K562 (cell line): ENCODE measurements at regions of chr3 and their contacts with region 1.

Region 1: GRCh38 chr3:185983495-185984141 is 45.8 kb upstream of the TRA2B start:
- DNase-seq: peak; percentile 78 to 87 (median 83)
- ATAC-seq: peak; percentile 96
- H3K4me3 ChIP-seq: no peak overlapping the region
- H3K27ac ChIP-seq: no peak overlapping the region
- H3K4me1 ChIP-seq: peaks cover 4% of the 10 kb centered on the region in 2 experiments; a peak in 3 of 5 replicates
- H3K27me3 ChIP-seq: peaks cover 0 to 6% of the 10 kb centered on the region in 2 experiments; a peak in 2 of 5 replicates
- CTCF ChIP-seq: peak; percentile 85 to 92 (median 86)
- EP300 ChIP-seq: no peak
- POLR2A ChIP-seq: no peak
- RAD21 ChIP-seq: peak; percentile 93

Region 2: GRCh38 chr3:185880600-185880999 is 103.0 kb before region 1 on chr3:
- CTCF ChIA-PET with region 1: no interaction called
- POLR2A ChIA-PET with region 1: no interaction called
- in situ Hi-C with region 1: no loop called
- intact Hi-C with region 1: loop called (anchors 5 kb)
- DNase-seq: no peak
- ATAC-seq: no peak
- H3K4me3 ChIP-seq: no peak overlapping the region
- H3K27ac ChIP-seq: no peak overlapping the region
- H3K4me1 ChIP-seq: no peaks in the 10 kb centered on the region; a peak in 2 of 5 replicates
- H3K27me3 ChIP-seq: no peaks in the 10 kb centered on the region; a peak in 1 of 5 replicates
- CTCF ChIP-seq: no peak
- EP300 ChIP-seq: no peak
- POLR2A ChIP-seq: no peak
- RAD21 ChIP-seq: no peak

Region 3: DNA sequence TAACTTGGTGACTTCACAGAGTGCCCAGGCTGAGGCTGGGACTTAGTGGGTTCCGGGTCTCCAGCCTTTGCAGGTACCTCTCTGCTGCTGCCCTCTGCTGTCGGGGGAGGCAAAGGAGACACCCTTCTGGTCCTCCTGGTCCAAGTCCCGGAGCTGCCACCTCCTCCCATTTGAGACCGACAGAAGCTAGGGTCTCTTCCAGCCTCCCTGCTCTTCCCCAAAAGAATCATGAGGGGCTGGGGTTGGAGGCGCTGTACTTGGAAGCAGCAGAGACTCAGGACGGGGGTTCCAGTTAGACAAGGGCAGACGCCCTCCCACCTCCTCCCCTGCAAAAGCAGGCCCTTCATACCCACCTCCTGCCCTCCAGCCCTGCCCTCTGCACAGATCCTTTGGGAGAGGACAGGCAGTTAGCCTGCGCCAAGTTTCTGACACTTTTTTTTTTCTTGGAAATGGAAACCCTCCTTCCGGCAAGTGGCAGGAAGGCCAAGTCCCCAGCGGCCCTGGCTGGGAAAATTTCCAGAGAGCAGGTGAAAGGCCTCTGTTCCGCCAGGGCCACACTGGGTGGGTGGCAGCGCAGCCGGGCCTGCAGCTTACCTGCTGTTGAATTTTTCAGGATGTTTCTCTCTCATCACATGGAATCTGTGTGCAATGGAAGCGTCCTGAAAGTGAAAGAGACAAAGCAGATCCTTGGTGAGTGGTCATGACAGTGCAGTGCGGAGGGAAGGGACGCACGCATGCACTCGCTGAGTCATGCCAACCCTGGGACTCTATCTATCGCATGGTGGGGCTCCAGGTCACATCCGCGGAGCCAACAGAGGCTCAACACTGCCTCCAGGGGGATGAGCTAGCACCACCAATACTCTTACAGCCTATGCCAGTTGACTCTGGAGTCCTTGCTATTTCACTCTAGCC is 258.5 kb after region 1 on chr3:
- CTCF ChIA-PET with region 1: interaction called, 13 read pairs
- POLR2A ChIA-PET with region 1: interaction called, 3 read pairs
- in situ Hi-C with region 1: no loop called
- intact Hi-C with region 1: loop called (anchors 1 kb)
- DNase-seq: peak; percentile 74 to 83 (median 78)
- ATAC-seq: peak; percentile 99
- H3K4me3 ChIP-seq: peak overlapping the region; percentile 17
- H3K27ac ChIP-seq: no peak overlapping the region
- H3K4me1 ChIP-seq: peaks cover 7 to 10% of the 10 kb centered on the region in 2 experiments
- H3K27me3 ChIP-seq: peaks cover 4 to 12% of the 10 kb centered on the region in 2 experiments; a peak in 3 of 5 replicates
- CTCF ChIP-seq: peak; percentile 83 to 93 (median 87)
- EP300 ChIP-seq: no peak
- POLR2A ChIP-seq: no peak
- RAD21 ChIP-seq: peak; percentile 80 to 84

Region 4: DNA sequence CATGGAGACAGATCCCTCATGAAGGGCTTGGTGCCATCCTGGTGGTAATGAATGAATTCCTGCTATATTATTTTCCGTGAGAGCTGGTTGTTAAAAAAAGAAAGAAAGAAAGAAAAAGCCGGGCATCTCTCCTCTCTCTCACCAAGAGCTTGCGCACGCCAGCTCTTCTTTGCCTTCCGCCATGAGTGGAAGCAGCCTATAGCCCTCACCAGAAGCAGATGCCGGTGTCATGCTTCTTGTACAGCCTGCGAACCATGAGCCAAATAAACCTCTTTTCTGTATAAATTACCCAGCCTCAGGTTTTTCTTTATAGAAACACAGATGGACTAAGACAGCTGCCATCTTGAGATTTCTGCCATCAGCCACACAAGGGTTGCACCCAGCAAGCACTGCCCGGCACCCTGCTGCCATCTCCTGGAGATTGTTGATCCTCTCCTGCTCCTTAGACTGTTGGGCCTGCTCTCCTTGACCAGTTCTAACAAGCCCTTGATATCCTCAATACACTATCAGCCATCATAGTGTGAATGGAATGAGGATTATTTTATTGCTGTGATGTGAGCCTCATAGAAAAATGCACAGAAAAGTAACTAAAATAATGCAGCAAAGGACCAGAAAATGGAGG is 625.7 kb after region 1 on chr3:
- CTCF ChIA-PET with region 1: no interaction called
- POLR2A ChIA-PET with region 1: no interaction called
- in situ Hi-C with region 1: no loop called
- intact Hi-C with region 1: loop called (anchors 5 kb)
- DNase-seq: peak in 2 of 4 experiments; percentile 35 to 43
- ATAC-seq: peak; percentile 94
- H3K4me3 ChIP-seq: no peak overlapping the region
- H3K27ac ChIP-seq: no peak overlapping the region
- H3K4me1 ChIP-seq: peaks cover 0 to 9% of the 10 kb centered on the region in 2 experiments; a peak in 2 of 5 replicates
- H3K27me3 ChIP-seq: peaks cover 0 to 18% of the 10 kb centered on the region in 2 experiments; a peak in 4 of 5 replicates
- CTCF ChIP-seq: peak; percentile 51 to 69 (median 59)
- EP300 ChIP-seq: no peak
- POLR2A ChIP-seq: no peak
- RAD21 ChIP-seq: peak; percentile 63 to 89; a peak in 3 of 4 replicates

Region 5: DNA sequence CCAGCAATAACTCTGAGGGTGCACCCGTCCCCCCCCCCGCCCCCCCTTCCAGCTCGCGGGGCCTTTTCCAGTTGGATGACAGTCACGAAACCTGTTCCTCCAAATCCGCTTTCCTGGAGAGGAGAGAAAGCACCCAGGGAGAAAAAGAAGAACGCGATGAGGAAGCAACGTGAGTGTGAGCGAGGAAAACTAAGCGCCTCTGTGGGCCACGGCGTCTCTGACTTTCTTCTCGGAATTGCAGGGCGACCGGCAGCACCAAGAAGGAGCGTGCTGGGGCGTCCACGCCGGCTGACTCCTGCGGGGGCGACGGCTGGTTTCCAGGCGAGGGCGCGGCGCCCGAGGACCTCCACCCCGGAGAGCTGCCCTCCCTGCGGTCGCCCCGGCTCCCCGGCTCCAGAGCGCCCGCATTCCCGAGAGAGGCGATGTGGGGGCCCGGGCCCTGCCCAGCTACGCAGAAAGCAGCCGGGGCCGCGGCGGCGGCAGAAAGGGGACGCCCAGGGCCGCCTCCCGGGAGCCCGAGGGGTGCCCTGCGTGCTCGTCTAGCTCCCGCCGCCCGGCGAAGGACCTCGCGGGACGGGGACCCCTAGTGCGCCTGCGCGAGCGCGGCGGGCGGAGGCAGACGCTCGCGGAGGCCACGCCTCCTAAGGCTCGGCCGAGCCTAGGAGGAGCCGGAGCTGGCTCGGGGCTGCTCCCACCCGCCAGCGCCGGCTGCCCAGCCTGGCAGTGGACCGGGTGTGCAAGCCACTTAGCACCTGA is 843.5 kb after region 1 on chr3:
- CTCF ChIA-PET with region 1: no interaction called
- POLR2A ChIA-PET with region 1: no interaction called
- in situ Hi-C with region 1: no loop called
- intact Hi-C with region 1: loop called (anchors 10 kb)
- DNase-seq: peak; percentile 92 to 99 (median 99)
- ATAC-seq: peak; percentile 88
- H3K4me3 ChIP-seq: peak overlapping the region; percentile 71
- H3K27ac ChIP-seq: peak overlapping the region; percentile 76
- H3K4me1 ChIP-seq: peaks cover 19 to 37% of the 10 kb centered on the region in 2 experiments; a peak in 4 of 5 replicates
- H3K27me3 ChIP-seq: peaks cover 23 to 24% of the 10 kb centered on the region in 2 experiments; a peak in 4 of 5 replicates
- CTCF ChIP-seq: no peak
- EP300 ChIP-seq: no peak
- POLR2A ChIP-seq: peak; percentile 79
- RAD21 ChIP-seq: no peak